Activated CD4-positive, alpha-beta T cell treated with anti-CD3 and anti-CD28 coated beads for 36 hours (primary cell): ENCODE measurements at regions of chr13 and their contacts with region 1.

Region 1: DNA sequence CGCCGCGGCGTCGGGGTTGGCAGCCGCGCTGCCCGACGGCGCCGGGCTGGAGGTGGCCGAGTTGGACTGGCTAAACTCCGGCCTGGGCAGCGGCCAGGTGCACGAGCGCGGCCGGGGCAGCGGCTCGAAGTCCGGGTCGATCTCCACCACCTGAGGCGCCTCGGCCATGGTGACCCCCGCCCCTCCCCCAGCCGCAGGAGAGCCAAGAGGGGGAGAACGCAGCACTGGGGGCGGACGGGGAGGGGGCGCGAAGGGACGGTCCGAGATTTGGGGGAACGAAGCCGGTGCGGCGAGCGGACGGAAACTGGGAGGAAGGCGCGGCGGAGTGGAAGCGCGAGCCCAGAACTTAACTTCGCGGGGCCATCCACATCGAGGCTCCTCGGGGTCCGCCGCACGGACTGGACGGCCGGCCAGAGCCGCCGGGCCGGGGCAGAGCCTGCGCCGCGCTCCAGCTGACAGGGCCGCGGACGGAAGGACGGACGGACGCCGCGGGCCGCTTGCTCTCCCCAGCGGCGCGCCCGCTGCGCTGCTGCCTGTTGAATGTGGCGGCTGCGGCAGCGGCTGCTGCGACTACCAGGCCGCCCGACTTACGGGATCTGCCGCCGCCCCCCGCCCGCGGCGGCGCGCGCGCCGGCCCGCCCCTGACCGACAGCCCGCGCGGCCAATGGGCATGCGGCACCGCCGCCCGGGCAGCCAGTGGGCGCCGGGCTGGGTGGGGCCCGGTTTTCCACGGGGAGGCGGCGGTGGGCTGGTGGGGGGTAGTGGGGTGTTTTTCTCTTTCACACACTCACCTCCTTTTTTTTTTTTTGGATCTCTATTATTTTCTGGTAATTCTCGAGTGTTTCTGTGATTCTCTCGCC is at the start of gene FOXO1:
- DNase-seq: peak; percentile 93
- ATAC-seq: peak; percentile 70
- H3K4me3 Mint-ChIP-seq: peak within 1 kb of the TSS; percentile 91
- H3K27ac Mint-ChIP-seq: peak within 1 kb of the TSS; percentile 92
- H3K4me1 Mint-ChIP-seq: peaks cover 39% of the 10 kb centered on the region
- H3K27me3 Mint-ChIP-seq: no peaks in the 10 kb centered on the region
- total RNA-seq, gene FOXO1: 37.5 to 42.5 TPM

Region 2: GRCh38 chr13:40102856-40103255 is 563.4 kb before region 1 on chr13:
- CTCF ChIA-PET with region 1: interaction called, 3 read pairs
- POLR2A ChIA-PET with region 1: interaction called, 3 read pairs
- intact Hi-C with region 1: loop called (anchors 1 to 2 kb)
- DNase-seq: peak; percentile 98
- ATAC-seq: peak; percentile 86
- H3K4me3 Mint-ChIP-seq: peak overlapping the region; percentile 62
- H3K27ac Mint-ChIP-seq: peak overlapping the region; percentile 99
- H3K4me1 Mint-ChIP-seq: peaks cover 53% of the 10 kb centered on the region
- H3K27me3 Mint-ChIP-seq: no peaks in the 10 kb centered on the region

Region 3: DNA sequence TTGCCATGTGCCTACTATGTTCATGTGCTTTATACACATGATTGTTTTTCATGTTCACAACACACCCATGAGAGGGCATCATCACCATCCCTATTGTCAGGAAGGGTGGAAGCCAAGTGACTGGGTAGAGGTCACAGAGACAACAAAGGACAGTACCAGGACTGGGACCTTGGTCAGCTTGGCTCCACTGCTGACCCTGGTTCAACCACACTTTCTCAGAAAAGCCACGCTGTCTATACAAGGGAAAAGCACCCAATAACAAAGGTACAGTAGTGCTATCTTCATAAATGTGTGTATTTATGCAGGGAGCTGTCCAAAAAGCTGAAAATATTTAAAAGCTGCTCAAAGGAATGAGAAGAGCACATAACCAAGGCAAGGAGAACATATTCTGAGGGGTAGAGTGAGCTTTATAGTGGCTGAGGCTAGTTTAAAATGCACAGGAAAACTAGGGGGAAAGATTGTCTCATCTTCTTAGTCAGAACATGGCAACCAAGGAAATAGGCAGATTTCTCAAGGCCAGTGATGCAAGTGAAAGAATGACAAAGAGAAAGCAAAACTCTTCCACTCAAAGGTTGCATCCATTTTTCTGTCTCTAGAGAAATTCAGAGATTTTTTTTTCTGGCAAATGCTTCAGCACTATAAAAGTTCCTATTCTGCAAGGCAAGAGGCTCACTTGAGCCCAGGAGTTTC is 414.8 kb before region 1 on chr13:
- CTCF ChIA-PET with region 1: interaction called, 3 read pairs
- POLR2A ChIA-PET with region 1: no interaction called
- intact Hi-C with region 1: loop called in 1 of 2 experiments (anchors 2 kb)
- DNase-seq: peak; percentile 23
- ATAC-seq: peak; percentile 87
- H3K4me3 Mint-ChIP-seq: no peak overlapping the region
- H3K27ac Mint-ChIP-seq: peak overlapping the region; percentile 82
- H3K4me1 Mint-ChIP-seq: peaks cover 50% of the 10 kb centered on the region
- H3K27me3 Mint-ChIP-seq: no peaks in the 10 kb centered on the region

Region 4: GRCh38 chr13:40438999-40439797 is 227.1 kb before region 1 on chr13:
- CTCF ChIA-PET with region 1: no interaction called
- POLR2A ChIA-PET with region 1: no interaction called
- intact Hi-C with region 1: loop called in 1 of 2 experiments (anchors 2 kb)
- DNase-seq: peak; percentile 53
- ATAC-seq: peak; percentile 84
- H3K4me3 Mint-ChIP-seq: peak overlapping the region; percentile 54
- H3K27ac Mint-ChIP-seq: peak overlapping the region; percentile 88
- H3K4me1 Mint-ChIP-seq: peaks cover 38% of the 10 kb centered on the region
- H3K27me3 Mint-ChIP-seq: no peaks in the 10 kb centered on the region

Region 5: DNA sequence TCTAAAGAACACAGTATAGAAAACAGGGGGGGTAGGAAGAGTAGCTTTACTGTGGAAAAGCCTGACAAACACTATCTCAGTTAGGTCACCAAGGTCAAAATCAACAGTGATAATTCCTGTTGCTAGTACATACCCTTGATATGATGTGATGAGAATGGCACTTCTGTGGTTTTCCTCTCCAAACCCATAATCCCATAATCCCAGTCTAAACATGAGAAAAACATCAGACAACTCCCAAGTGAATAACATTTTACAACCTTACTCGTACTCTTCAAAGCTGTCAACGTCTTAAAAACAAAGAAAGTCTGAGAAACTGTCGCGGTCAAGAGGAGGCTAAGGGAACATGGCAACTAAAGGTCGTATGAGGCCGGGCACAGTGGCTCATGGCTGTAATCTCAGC is 137.4 kb before region 1 on chr13:
- CTCF ChIA-PET with region 1: no interaction called
- POLR2A ChIA-PET with region 1: no interaction called
- intact Hi-C with region 1: no loop called
- DNase-seq: no peak
- ATAC-seq: no peak
- H3K4me3 Mint-ChIP-seq: no peak overlapping the region
- H3K27ac Mint-ChIP-seq: no peak overlapping the region
- H3K4me1 Mint-ChIP-seq: peaks cover 26% of the 10 kb centered on the region
- H3K27me3 Mint-ChIP-seq: no peaks in the 10 kb centered on the region

Region 6: GRCh38 chr13:40613192-40613818 is 53.0 kb before region 1 on chr13:
- CTCF ChIA-PET with region 1: no interaction called
- POLR2A ChIA-PET with region 1: interaction called, 3 read pairs
- intact Hi-C with region 1: loop called (anchors 2 kb)
- DNase-seq: peak; percentile 71
- ATAC-seq: peak; percentile 86
- H3K4me3 Mint-ChIP-seq: peak overlapping the region; percentile 75
- H3K27ac Mint-ChIP-seq: peak overlapping the region; percentile 99
- H3K4me1 Mint-ChIP-seq: peaks cover 95% of the 10 kb centered on the region
- H3K27me3 Mint-ChIP-seq: no peaks in the 10 kb centered on the region

Region 7: GRCh38 chr13:40770934-40771618 is 104.8 kb after region 1 on chr13 and contains the start of gene MRPS31:
- CTCF ChIA-PET with region 1: no interaction called
- POLR2A ChIA-PET with region 1: no interaction called
- intact Hi-C with region 1: loop called in 1 of 2 experiments (anchors 2 kb)
- DNase-seq: peak; percentile 97
- ATAC-seq: peak; percentile 99
- H3K4me3 Mint-ChIP-seq: peak within 1 kb of the TSS; percentile 89
- H3K27ac Mint-ChIP-seq: peak within 1 kb of the TSS; percentile 97
- H3K4me1 Mint-ChIP-seq: peaks cover 30% of the 10 kb centered on the region
- H3K27me3 Mint-ChIP-seq: no peaks in the 10 kb centered on the region
- total RNA-seq, gene MRPS31: 45.8 to 46.1 TPM

Region 8: GRCh38 chr13:41465241-41465847 is 799.1 kb after region 1 on chr13:
- CTCF ChIA-PET with region 1: no interaction called
- POLR2A ChIA-PET with region 1: no interaction called
- intact Hi-C with region 1: loop called in 1 of 2 experiments (anchors 5 kb)
- DNase-seq: peak; percentile 95
- ATAC-seq: peak; percentile 84
- H3K4me3 Mint-ChIP-seq: peak overlapping the region; percentile 82
- H3K27ac Mint-ChIP-seq: peak overlapping the region; percentile 98
- H3K4me1 Mint-ChIP-seq: peaks cover 91% of the 10 kb centered on the region
- H3K27me3 Mint-ChIP-seq: no peaks in the 10 kb centered on the region